ENCODE measurements at regions of chr3 and their contacts with region 1.

Region 1: DNA sequence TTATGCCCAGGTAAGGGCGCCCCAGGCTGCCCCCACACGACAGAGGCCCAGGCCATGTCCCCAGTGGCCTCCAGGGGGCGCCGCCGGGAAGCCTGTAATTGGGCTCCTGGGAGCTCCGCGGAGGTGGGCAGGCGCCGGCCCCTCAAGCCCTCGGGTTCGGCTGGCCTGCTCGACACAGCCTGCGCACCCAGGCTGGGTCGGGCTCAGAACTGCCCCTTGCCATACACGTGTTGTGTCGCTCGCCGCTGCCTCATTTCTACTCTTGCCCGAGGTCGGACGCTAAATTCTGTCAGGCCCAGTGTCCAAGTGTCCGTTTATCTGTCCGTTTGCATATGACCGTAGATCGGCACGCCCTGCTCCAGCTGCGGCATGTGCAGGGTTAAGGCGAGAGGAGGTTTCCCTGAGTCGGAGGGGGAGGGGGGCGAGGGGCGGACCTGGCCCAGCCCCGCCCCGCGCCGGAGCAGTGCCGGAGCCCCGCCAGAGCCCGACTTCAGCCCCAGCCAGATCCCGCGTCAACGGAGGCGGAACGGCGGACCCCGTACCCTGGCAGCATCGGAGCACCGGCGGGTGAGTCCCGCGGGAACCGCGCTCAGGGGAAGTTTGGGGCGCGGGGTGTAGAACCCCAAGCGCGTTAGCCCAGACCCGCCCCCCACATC is at the start of gene KLHDC8B:
- DNase-seq: peak; percentile 58 to 68 (median 68)
- H3K4me3 ChIP-seq: peak within 1 kb of the TSS; percentile 67 to 87 (median 87)
- H3K4me3 Mint-ChIP-seq: peak within 1 kb of the TSS; percentile 83 to 95
- H3K27ac ChIP-seq: peak within 1 kb of the TSS; percentile 36 to 63
- H3K27ac Mint-ChIP-seq: peak within 1 kb of the TSS in 5 of 7 donors; percentile 37 to 88 (median 74)
- H3K4me1 ChIP-seq: peaks cover 22 to 33% of the 10 kb centered on the region in 2 donors
- H3K4me1 Mint-ChIP-seq: peaks cover 24% of the 10 kb centered on the region
- H3K27me3 ChIP-seq: no peaks in the 10 kb centered on the region
- H3K27me3 Mint-ChIP-seq: peaks cover 0 to 9% (median 2%) of the 10 kb centered on the region in 3 donors
- CTCF ChIP-seq: peak; percentile 99
- polyA plus RNA-seq, gene KLHDC8B: 7.5 to 16.7 (median 12.9) TPM

Region 2: DNA sequence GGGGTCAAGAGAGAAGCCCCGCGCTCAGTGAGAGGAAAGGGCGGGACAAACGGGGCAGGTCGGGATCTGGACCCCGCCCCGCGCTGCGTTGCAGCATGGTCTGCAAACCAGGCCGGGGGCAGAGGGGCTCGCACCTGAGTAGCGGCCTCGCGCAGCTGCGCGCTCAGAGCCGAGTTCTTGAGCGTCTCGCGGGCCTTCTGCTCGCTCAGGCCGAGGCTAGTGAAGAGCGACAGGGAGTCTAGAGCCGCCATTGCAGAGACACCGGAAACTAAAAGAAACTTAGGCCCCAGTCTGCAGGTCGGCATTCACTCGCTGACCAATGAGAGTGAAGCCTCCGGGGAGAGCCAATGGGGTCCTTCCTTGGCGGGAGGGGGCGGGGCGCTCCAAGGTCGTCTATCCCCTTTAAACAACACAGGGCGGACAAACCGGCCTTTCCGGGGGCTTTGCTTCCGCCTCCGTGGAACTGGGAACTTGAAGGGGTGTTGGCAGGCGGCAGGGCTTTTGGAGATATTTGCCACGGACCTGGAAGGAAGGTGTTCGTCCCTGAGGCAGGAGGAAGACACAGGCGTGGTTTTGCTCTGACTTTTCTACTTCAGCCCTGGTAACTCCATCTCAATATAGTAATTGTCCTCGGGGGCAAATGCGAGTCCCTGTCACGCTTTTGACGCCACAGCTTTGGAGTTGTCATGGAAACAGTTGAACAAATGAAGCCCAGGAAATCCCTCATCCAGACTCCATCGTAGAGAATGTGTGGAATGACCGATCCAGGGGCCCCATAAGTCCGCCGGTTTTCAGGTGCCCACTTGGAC is 66.6 kb before region 1 on chr3 and contains the start of gene QARS1:
- intact Hi-C with region 1: no loop called
- DNase-seq: peak; percentile 77 to 89 (median 84)
- H3K4me3 ChIP-seq: peak within 1 kb of the TSS; percentile 80 to 92 (median 84)
- H3K4me3 Mint-ChIP-seq: peak within 1 kb of the TSS; percentile 95 to 98
- H3K27ac ChIP-seq: peak within 1 kb of the TSS; percentile 58 to 86
- H3K27ac Mint-ChIP-seq: peak within 1 kb of the TSS; percentile 93 to 97 (median 95)
- H3K4me1 ChIP-seq: peaks cover 14 to 28% of the 10 kb centered on the region in 2 donors
- H3K4me1 Mint-ChIP-seq: peaks cover 25% of the 10 kb centered on the region
- H3K27me3 ChIP-seq: no peaks in the 10 kb centered on the region
- H3K27me3 Mint-ChIP-seq: peaks cover 0 to 2% (median 1%) of the 10 kb centered on the region in 3 donors
- CTCF ChIP-seq: no peak
- polyA plus RNA-seq, gene QARS1: 142 to 326 (median 142) TPM

Region 3: DNA sequence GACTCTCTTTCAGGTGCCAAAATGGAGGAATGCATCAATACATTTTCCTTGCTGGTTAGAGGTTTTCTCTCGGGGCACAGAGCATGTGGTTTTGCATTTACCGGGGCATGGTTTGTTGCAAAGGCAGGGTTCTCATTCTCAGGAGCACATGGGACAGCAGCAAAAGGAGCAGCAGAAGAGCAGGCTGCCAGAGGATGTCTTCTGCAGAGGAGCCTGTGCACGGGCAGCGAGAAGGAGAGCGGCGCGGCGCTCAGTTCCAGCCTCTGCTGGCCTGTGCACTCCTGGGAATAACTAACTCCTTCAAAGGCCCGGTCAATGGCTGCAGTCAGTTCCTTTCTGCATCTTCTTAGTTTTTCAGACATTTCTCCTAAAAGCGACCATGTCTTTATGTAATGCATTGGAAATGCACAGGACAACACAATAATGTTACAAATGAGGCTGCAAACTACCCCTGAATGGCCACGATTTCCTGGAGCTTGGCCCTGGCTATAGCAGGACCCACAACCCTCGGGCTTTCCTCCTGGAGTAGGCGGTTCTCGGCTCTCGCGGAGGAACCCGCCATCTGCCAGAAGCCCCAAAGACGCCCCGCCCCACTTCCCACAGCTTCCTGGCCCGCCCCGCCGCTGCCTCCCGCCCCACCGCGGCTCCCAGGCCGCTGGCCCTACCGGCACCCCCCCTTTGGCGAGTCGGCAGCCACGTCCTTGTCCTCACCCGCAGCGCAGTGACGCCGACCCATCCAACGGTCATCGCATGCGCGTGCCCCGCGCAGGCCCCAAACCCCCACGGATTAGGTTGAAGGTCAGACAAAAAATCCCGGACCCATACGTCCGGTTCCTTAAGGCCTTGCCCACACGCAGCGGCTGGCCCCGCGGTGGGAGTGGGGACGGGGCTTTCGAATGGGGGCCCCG is 105.5 kb after region 1 on chr3 and contains the start of gene C3orf62:
- intact Hi-C with region 1: loop called (anchors 1 to 5 kb)
- DNase-seq: peak; percentile 65 to 69 (median 66)
- H3K4me3 ChIP-seq: peak within 1 kb of the TSS; percentile 41 to 79 (median 43)
- H3K4me3 Mint-ChIP-seq: peak within 1 kb of the TSS; percentile 67 to 92
- H3K27ac ChIP-seq: peak within 1 kb of the TSS; percentile 66 to 79
- H3K27ac Mint-ChIP-seq: peak within 1 kb of the TSS; percentile 80 to 93 (median 88)
- H3K4me1 ChIP-seq: peaks cover 21 to 25% of the 10 kb centered on the region in 2 donors
- H3K4me1 Mint-ChIP-seq: peaks cover 25% of the 10 kb centered on the region
- H3K27me3 ChIP-seq: no peaks in the 10 kb centered on the region
- H3K27me3 Mint-ChIP-seq: peaks cover 0 to 2% (median 0%) of the 10 kb centered on the region in 3 donors
- CTCF ChIP-seq: no peak
- polyA plus RNA-seq, gene C3orf62: 0.60 to 15.7 (median 1.0) TPM

Region 4: GRCh38 chr3:49445381-49445780 is 274.1 kb after region 1 on chr3:
- intact Hi-C with region 1: loop called in 1 of 2 experiments (anchors 10 kb)
- DNase-seq: no peak
- H3K4me3 ChIP-seq: peak overlapping the region in 1 of 3 experiments; percentile 20
- H3K4me3 Mint-ChIP-seq: no peak overlapping the region
- H3K27ac ChIP-seq: peak overlapping the region; percentile 79 to 83
- H3K27ac Mint-ChIP-seq: peak overlapping the region; percentile 87 to 95 (median 94)
- H3K4me1 ChIP-seq: peaks cover 42 to 43% of the 10 kb centered on the region in 2 donors
- H3K4me1 Mint-ChIP-seq: peaks cover 30% of the 10 kb centered on the region
- H3K27me3 ChIP-seq: no peaks in the 10 kb centered on the region
- H3K27me3 Mint-ChIP-seq: peaks cover 0 to 3% (median 0%) of the 10 kb centered on the region in 3 donors
- CTCF ChIP-seq: no peak

Measured in CD14-positive monocyte (primary cell).